Activated T-helper 1 cell treated with anti-CD3 and anti-CD28 coated beads, Interleukin-12 subunit alpha, Interleukin-12 subunit beta, Interleukin-2, Interleukin-4 antibody, amounts not matched to agents 30 ng/mL and 10 ng/mL and 1 ng/mL, durations not matched to agents 14 hours and 24 hours and 36 hours (primary cell): ENCODE measurements at regions of chr17 and their contacts with region 1.

Region 1: DNA sequence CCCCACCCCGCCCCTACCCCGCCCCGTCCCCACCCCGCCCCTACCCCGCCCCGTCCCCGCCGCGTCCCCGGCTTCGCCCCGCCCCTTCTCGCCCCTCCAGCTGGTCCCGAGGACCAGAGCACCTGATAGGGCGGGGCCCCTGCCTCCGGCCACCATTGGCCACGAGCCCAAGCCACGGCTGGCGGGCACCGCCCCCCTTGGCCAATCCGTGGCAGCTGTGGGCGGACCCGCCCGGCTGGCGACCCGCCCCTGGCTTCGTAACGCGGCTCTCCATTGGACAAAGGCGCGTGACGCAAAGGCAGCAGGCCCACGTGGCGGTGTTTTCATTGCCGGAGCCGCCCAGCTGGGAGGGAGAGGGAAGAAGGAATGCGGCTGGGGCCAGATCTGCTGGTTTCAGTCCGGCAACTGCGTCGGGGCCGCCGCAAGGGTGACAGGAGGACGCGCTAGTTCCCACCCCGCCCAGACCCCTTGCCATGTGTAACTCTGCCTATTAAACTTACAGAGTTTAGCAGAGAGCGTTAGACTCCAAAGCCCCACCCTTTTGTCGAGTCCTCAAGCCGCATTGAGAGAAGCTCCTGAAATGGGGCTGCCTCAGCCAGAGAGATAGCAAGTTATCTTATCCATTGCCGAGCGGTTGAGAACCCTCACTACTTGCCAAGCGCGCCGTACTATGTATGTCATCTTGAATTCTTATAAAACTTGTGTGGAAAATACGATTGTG is 403 bp upstream of the WIPI1 start:
- DNase-seq: peak; percentile 99
- H3K4me3 Mint-ChIP-seq: peak overlapping the region; percentile 78
- H3K27ac Mint-ChIP-seq: peak overlapping the region; percentile 85
- H3K4me1 Mint-ChIP-seq: peaks cover 70% of the 10 kb centered on the region
- H3K27me3 Mint-ChIP-seq: no peaks in the 10 kb centered on the region

Region 2: DNA sequence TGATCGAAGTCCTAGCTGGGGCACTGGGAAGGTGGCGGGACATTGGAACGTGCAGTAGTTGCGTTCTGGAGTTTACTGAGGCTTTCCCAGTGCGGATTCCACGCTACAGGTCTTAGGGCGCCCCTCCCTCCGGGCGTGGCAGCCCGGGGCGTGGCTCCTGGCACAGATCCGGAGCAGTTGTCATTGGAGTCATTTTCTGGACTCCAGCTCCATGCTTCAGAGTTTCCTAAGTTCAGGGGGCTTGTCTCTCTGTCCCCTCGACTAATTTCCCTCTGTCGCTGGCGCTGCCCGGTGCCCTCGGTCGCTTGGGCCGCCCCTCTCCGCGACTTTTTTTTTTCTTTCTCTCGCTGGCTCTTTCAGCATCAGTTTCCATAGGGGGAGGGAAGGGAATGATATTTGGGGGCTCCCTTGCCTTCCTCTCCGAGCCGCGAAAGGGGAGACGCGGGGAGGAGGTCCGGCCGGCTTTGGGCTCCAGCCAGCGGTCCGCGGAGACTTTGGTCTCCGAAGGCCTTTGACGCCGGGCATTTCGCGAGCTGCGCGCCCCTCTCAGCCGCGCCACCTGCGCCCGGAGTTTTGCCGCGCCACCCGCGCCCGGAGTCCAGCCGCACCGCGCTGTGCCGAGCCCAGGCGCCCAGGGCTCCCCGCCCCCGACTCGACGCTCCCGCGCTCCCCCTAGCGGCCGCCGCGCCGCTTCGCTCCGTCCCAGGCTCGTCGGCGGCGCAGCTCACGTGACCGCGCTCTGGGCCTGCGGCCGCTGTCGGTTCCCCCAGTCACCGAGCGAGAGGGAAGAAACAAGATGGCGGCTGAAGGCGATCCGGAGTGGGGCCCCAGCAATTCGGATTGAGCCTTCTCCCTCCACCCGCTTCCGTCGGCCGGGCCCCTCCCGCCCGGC is 632.7 kb before region 1 on chr17 and contains the start of gene BPTF:
- intact Hi-C with region 1: loop called (anchors 5 kb)
- DNase-seq: peak; percentile 91
- H3K4me3 Mint-ChIP-seq: peak within 1 kb of the TSS; percentile 95
- H3K27ac Mint-ChIP-seq: peak within 1 kb of the TSS; percentile 99
- H3K4me1 Mint-ChIP-seq: peaks cover 39% of the 10 kb centered on the region
- H3K27me3 Mint-ChIP-seq: peaks cover 19% of the 10 kb centered on the region
- total RNA-seq, gene BPTF: 76.6 and 78.4 TPM in 2 replicates

Region 3: DNA sequence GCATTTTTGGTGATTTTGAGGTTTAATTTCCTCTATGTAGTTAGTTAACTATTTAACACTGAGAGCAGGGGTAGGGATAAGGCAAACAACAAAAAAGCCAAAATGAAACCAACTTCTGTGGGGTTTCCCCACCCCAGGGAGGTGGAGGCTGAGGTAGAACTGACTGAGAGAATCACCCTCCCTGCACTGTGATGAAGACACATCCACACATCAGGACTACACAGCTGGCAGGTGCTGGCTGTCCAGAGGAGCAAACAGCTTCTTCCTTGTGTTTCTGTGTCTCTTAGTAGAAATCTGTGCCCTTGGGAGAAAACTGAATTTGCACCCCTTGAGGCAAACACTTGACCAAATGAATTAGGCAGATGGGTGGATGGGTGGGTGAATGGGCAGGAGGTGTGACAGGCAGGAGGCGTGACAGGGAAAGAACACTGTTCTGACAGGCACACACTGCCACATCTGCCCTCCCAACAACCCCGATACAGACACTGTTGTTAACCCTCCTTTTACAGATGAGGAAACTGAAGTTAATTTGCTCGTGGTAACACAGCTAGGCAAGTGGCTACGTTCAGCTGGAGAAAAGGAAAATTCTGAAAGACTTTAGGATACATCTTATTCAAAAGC is 272.8 kb before region 1 on chr17:
- intact Hi-C with region 1: loop called (anchors 1 kb)
- DNase-seq: peak; percentile 70
- H3K4me3 Mint-ChIP-seq: peak overlapping the region; percentile 51
- H3K27ac Mint-ChIP-seq: peak overlapping the region; percentile 53
- H3K4me1 Mint-ChIP-seq: peaks cover 57% of the 10 kb centered on the region
- H3K27me3 Mint-ChIP-seq: peaks cover 10% of the 10 kb centered on the region

Region 4: DNA sequence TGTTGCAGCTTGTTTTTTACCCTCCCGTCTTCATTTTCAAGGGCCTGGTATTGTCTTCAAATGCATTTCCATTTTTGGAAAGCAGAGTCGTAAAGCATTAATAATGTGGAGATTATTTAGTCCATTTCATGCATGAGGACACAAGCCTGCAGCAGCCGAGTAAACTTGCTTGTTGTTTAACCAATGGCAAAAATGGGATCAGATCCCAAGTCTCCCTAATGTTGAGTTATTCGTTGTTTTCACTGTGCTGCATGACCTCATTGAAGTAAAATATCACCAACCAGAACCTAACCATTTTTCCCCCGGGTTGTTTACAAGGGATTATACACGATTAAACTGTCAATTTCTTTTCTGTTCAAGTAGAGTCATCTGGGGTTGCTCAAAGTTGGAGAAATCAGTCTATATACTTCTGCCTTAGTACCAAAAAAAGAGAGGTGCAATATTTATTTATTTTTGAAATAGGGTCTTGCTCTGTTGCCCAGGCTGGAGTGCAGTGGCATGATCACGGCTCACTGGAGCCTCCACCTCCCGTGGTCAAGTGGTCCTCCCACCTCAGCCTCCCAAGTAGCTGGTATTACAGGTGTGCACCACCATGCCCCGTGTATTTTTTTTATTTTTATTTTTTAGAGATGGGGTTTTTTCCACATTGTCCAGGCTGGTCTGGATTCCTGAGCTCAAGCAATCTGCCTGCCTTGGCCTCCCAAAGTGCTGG is 197.5 kb before region 1 on chr17:
- intact Hi-C with region 1: loop called (anchors 1 kb)
- DNase-seq: no peak
- H3K4me3 Mint-ChIP-seq: peak overlapping the region; percentile 80
- H3K27ac Mint-ChIP-seq: no peak overlapping the region
- H3K4me1 Mint-ChIP-seq: peaks cover 58% of the 10 kb centered on the region
- H3K27me3 Mint-ChIP-seq: no peaks in the 10 kb centered on the region

Region 5: DNA sequence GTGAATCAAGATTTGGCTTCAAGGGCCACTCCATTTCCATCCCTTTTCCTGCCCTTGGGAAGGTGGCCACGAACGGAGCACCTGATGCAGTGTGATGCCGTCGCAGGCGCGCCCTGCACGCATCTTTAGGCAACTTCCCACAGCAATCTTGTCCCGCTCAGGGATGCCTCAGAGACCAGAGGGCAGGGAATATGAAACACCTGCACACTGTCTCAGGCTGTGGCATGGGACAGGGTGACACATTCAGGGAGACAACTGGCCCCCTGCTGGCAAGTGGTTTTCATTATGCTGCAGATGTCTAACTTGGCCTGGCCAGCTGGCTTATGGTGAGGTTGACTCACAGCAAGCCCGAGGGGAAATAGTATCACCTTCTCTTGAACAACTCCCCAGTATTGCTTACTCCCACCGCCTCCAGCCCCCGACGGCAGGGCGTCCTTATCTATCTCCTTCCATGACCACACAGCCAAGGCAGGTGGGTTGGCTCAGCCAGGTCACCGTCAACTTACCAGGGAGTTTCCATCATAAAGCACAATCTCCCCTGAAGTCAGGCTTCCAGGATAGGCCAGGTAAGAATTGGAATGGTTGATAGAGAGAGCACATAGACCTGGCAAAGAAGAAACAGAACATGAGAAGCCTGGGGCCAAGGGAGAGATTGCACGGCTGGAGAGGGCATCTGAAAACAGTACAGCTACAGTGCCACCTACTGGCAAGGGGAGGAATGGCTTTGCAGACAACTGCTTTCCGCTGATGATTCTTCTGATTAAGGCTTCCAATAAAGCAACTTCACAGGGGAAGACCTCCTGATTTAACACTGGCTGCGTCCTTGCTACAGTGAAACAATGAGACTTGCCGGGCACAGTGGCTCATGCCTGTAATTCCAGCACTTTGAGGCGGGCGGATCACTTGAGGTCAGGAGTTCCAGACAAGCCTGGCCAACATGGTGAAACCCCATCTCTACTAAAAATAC is 21.5 kb before region 1 on chr17:
- intact Hi-C with region 1: loop called (anchors 1 kb)
- DNase-seq: peak; percentile 77
- H3K4me3 Mint-ChIP-seq: peak overlapping the region; percentile 64
- H3K27ac Mint-ChIP-seq: peak overlapping the region; percentile 91
- H3K4me1 Mint-ChIP-seq: peaks cover 64% of the 10 kb centered on the region
- H3K27me3 Mint-ChIP-seq: no peaks in the 10 kb centered on the region

Region 6: GRCh38 chr17:68704871-68705713 is 247.4 kb after region 1 on chr17:
- intact Hi-C with region 1: no loop called
- DNase-seq: no peak
- H3K4me3 Mint-ChIP-seq: no peak overlapping the region
- H3K27ac Mint-ChIP-seq: no peak overlapping the region
- H3K4me1 Mint-ChIP-seq: no peaks in the 10 kb centered on the region
- H3K27me3 Mint-ChIP-seq: peaks cover 2% of the 10 kb centered on the region